OCI-LY7 (cell line): ENCODE measurements at regions of chr15 and their contacts with region 1.

Region 1: GRCh38 chr15:49155110-49155833 is at the start of gene COPS2:
- DNase-seq: peak; percentile 98
- H3K4me3 ChIP-seq: peak within 1 kb of the TSS; percentile 95
- H3K27ac ChIP-seq: peak within 1 kb of the TSS; percentile 53
- H3K4me1 ChIP-seq: peaks cover 13% of the 10 kb centered on the region
- CTCF ChIP-seq: no peak
- total RNA-seq, gene COPS2: 24.6 and 38.6 TPM in 2 replicates

Region 2: DNA sequence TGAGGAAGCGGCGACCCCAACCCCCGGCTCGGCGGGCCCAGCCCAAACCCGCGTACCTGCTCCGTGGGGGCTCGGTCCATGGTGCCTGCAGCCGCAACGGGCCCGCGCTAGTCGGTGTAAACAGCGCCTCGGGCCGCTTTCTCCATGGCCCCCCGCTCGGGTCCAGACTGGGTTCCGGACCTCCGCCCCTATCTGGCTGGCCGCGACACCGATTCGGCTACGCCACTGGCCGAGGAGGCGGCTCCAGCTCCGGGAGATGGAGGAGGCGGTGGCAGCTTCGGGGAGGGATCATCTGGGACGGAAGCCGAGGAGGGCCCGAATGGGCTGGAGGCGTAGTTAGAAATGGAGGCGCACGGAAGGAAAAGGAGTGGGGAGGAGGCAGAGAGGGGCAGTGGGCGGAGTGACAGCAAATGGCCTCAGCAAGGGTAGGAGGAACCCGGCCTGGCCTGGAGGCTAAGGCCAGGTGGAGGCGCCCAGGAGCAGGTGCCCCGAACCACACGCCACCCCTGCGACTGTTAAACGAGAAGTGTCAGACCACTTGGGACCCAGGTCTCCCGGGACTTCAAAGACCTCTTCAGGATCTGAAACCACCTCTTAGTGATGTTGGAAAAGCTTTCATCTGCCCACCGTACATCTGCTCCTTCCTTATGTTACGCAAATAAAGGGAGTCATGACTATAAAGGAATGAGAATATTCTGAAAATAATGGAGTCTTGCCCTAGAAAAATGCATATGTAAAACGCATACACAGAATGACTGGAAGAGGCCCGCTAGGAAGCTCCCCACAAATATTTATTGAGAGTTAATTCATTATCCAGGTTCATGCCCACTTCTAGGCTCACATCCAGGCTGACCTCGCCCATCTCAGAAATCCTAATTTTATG is 108.8 kb before region 1 on chr15 and contains the start of gene SECISBP2L:
- CTCF ChIA-PET with region 1: no interaction called
- POLR2A ChIA-PET with region 1: interaction called, 4 read pairs
- intact Hi-C with region 1: loop called (anchors 2 kb)
- DNase-seq: peak; percentile 93
- H3K4me3 ChIP-seq: peak within 1 kb of the TSS; percentile 86
- H3K27ac ChIP-seq: peak within 1 kb of the TSS; percentile 62
- H3K4me1 ChIP-seq: peaks cover 23% of the 10 kb centered on the region
- CTCF ChIP-seq: peak; percentile 78
- total RNA-seq, gene SECISBP2L: 13.3 and 15.4 TPM in 2 replicates

Region 3: GRCh38 chr15:49169880-49170597 is 14.8 kb after region 1 on chr15 and contains the start of gene GALK2:
- CTCF ChIA-PET with region 1: no interaction called
- POLR2A ChIA-PET with region 1: interaction called, 27 read pairs
- intact Hi-C with region 1: loop called (anchors 1 kb)
- DNase-seq: peak; percentile 78
- H3K4me3 ChIP-seq: peak within 1 kb of the TSS; percentile 74
- H3K27ac ChIP-seq: peak within 1 kb of the TSS; percentile 29
- H3K4me1 ChIP-seq: peaks cover 18% of the 10 kb centered on the region
- CTCF ChIP-seq: no peak
- total RNA-seq, gene GALK2: 21.1 and 31.5 TPM in 2 replicates

Region 4: DNA sequence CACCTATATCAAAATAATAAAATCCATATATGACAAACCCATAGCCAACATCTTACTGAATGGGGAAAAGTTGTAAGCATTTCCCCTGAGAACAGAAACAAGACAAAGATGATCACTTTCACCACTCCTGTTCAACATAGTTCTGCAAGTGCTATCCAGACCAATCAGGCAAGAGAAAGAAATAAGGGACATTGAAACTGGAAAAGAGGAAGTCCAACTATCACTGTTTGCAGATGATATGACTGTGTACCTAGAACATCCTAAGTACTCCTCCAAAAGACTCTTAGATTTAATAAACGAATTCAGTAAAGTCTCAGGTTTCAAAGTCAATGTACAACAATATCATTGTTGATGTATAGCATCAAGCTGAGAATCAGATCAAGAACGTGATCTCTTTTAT is 232.2 kb after region 1 on chr15:
- CTCF ChIA-PET with region 1: no interaction called
- POLR2A ChIA-PET with region 1: no interaction called
- intact Hi-C with region 1: no loop called
- DNase-seq: no peak
- H3K4me3 ChIP-seq: no peak overlapping the region
- H3K27ac ChIP-seq: no peak overlapping the region
- H3K4me1 ChIP-seq: peaks cover 14% of the 10 kb centered on the region
- CTCF ChIP-seq: no peak

Region 5: DNA sequence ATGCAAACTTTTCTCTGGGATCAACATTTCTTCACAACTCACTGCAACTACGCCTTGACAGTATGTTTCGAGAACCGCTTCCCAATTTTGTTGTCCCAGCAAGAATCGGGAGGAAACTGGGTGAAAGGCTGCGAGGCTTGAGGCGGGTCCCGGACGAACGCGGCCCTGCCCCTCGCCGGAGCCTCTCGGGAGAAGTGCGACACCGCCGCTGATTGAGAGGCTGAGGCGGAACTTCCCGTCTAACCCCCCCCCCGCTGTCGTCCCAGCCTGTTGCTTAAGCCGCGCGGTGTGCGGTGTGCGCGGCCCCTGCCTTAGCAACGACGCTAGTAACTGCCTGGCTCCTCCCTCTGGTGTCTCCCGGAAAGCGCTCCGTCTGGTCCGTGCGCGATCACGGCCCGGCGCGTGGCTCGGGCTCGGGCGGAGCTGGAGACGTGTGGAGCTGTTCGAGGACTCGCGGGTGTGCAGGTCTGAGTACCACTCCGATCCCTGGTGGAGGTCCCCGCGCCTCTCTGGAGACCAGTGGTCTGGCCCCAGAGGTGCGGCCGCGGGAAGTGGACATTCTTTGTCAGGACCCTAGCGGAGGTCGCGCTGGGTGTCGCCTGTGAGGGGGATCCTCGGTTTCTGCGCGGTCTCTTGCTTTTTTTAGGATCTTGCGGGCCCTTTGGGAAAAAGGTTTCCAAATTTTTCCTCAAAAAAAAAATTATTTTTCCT is 465.5 kb after region 1 on chr15 and contains the starts of genes DTWD1 and FAM227B:
- CTCF ChIA-PET with region 1: no interaction called
- POLR2A ChIA-PET with region 1: interaction called, 4 read pairs
- intact Hi-C with region 1: loop called (anchors 2 kb)
- DNase-seq: peak; percentile 97
- H3K4me3 ChIP-seq: peak within 1 kb of the TSS; percentile 86
- H3K27ac ChIP-seq: peak within 1 kb of the TSS; percentile 54
- H3K4me1 ChIP-seq: peaks cover 17% of the 10 kb centered on the region
- CTCF ChIP-seq: 0 out of 2 replicates have a peak, but pooled peaks have one; percentile 6
- total RNA-seq, gene DTWD1: 6.8 and 9.4 TPM in 2 replicates
- total RNA-seq, gene FAM227B: 2.9 and 3.2 TPM in 2 replicates